ENCODE measurements at regions of chr12 and their contacts with region 1.

Region 1: GRCh38 chr12:56763753-56764657 is 881 bp downstream of the HSD17B6 start:
- DNase-seq: no peak
- H3K4me3 ChIP-seq: no peak overlapping the region
- H3K27ac ChIP-seq: no peak overlapping the region
- H3K4me1 ChIP-seq: peaks cover 0 to 3% (median 0%) of the 10 kb centered on the region in 4 experiments
- H3K27me3 ChIP-seq: no peaks in the 10 kb centered on the region

Region 2: GRCh38 chr12:56541631-56542030 is 222.4 kb before region 1 on chr12:
- CTCF ChIA-PET with region 1: no interaction called
- POLR2A ChIA-PET with region 1: no interaction called
- DNase-seq: no peak
- H3K4me3 ChIP-seq: no peak overlapping the region
- H3K27ac ChIP-seq: no peak overlapping the region
- H3K4me1 ChIP-seq: no peaks in the 10 kb centered on the region
- H3K27me3 ChIP-seq: no peaks in the 10 kb centered on the region

Region 3: DNA sequence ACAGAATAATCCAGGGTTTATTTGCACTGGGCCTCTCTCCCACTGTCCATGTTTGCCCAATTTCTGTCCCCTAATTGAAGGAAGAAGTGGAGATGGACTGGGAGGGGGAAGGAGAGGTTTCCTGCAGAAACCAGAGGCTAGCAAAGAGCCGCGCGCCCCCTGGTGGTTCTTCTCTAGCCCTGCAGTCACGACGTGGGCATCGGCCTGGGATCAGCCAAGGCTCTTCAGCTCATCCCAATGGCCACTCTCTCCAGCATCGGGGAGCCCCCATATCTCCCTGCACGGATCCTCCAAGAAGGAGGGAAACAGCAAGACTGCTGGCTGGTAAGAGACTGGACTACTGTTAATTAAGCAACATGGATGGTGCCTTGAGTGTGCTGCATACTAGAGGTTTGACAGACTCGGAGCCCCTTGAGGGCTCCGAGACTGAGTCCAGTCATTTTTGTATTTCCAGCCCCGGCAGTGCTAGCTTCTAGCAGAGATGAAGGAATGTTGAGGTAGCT is 223.6 kb after region 1 on chr12:
- CTCF ChIA-PET with region 1: interaction called, 11 read pairs
- POLR2A ChIA-PET with region 1: no interaction called
- DNase-seq: peak; percentile 61 to 69 (median 68)
- H3K4me3 ChIP-seq: peak overlapping the region in 3 of 7 experiments; percentile 14 to 54 (median 20)
- H3K27ac ChIP-seq: no peak overlapping the region
- H3K4me1 ChIP-seq: peaks cover 5 to 55% (median 40%) of the 10 kb centered on the region in 4 experiments
- H3K27me3 ChIP-seq: no peaks in the 10 kb centered on the region